Posterior cingulate gyrus (tissue), 11 donors: ENCODE measurements at regions of chr7 and their contacts with region 1.

Region 1: GRCh38 chr7:107563775-107564552 is at the starts of genes COG5 and DUS4L:
- DNase-seq: peak; percentile 74 to 97 (median 80)

Region 2: DNA sequence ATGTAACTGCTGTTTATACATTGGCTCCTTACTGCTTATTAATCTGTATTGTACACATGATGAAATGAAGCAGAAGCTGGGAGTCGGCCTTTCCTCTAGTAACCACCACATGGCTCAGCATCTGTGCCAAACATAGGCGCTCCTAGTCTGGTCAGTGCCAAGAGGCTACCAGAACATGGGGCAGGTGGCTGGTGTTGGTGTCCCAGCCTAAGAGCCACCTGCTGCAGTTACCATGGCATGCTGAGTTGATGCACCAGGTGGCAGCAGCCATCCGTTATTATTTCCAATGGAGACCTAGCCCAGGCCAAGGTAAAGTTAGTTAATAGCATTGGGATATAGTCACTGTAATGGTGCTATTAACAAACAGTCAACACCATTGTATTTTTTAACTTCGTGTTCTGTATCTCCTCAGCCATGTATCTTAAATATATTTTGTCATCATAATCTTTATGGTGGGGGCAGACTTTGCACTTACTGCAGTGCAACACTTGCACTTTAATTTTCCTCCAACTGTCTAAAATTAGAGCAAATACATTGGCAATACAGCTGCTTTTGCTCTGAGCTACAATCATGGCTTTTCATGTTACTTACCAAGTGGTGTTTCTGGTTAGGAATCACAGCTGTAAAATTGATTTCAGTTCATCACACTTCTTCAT is 362.0 kb before region 1 on chr7:
- intact Hi-C with region 1: loop called (anchors 2 kb)
- DNase-seq: peak; percentile 17 to 91 (median 58)

Region 3: GRCh38 chr7:107725151-107725740 is 161.3 kb after region 1 on chr7:
- intact Hi-C with region 1: loop called (anchors 10 kb)
- DNase-seq: peak in 4 of 10 donors; percentile 16 to 38 (median 28)